ENCODE measurements at regions of chr17 and their contacts with region 1.

Region 1: DNA sequence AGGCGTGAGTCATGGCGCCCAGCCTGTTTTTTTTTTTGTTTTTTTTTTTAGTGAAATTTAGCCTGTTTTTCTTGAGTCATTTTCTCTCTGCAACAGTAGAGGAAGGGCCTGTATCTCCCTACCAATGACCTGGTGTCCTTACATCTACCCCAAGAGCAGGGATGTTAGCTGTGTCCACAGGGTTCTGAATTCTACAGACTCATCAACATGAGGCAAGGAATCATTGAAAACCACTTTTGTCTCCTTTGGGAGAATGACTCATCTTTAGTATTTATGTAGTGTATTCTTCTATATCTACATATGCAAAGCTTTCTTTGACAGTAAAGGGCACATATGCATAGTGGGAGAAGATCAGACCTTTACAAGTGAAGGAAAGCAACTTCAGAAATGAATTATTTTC is 105.3 kb downstream of the SPECC1 start:
- DNase-seq: no peak
- ATAC-seq: no peak
- H3K4me3 ChIP-seq: no peak overlapping the region
- H3K27ac ChIP-seq: no peak overlapping the region
- H3K4me1 ChIP-seq: no peaks in the 10 kb centered on the region
- H3K27me3 ChIP-seq: no peaks in the 10 kb centered on the region
- CTCF ChIP-seq: no peak
- POLR2A ChIP-seq: no peak

Region 2: DNA sequence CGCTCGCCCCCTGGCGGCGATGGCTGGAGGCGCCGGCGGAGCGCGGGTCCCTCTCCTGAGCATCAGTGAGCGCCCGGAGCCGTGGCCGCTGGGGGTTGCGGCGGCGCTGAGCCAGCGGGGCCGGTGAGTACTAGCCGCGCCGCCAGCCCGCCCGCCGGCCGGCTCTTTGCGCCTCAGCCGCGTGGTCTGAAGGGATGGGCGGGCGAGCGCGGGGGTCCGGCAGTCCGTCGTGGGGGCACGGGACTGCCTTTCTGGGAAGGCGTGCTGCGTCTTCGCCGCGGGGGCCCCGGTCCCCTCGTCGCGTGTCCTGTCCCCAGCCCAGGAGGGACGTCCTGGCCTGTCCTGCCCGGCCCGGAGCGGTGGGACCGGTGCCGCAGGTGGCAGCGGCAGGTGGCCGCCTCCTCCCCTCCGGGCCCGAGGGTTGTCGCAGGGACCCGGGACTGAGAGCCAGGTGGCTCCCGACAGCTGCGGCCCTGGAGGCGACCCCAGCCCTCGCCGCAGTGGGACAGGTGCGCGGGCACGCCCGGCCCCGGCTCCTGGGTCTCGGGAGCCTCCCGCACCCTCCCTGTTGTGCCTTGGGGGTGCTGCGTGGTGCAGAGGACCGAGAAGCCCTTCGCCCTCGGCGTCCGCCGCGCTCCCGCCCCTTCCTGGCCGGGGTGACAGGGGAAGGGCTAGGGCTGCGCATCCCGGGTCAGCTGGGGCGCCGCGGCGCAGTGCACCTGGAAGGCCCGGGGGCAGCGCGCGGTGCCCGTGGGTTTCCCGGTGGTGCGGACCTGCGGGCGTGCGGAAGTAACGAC is 105.0 kb before region 1 on chr17 and contains the start of gene SPECC1:
- intact Hi-C with region 1: loop called (anchors 5 kb)
- DNase-seq: peak; percentile 76 to 80 (median 78)
- ATAC-seq: peak; percentile 97
- H3K4me3 ChIP-seq: peak within 1 kb of the TSS; percentile 29 to 64
- H3K27ac ChIP-seq: peak within 1 kb of the TSS in 2 of 4 donors; percentile 20 to 49
- H3K4me1 ChIP-seq: peaks cover 20% of the 10 kb centered on the region
- H3K27me3 ChIP-seq: no peaks in the 10 kb centered on the region
- CTCF ChIP-seq: peak in 5 of 7 experiments; percentile 90 to 100 (median 95)
- POLR2A ChIP-seq: no peak
- total RNA-seq, gene SPECC1: 15.8 to 17.4 TPM

Measured in body of pancreas (tissue), 4 donors.